HepG2 (cell line): ENCODE measurements at regions of chr20 and their contacts with region 1.

Region 1: GRCh38 chr20:63537525-63538203 is 488 bp upstream of the PTK6 start:
- DNase-seq: peak; percentile 86
- ATAC-seq: peak; percentile 79
- H3K4me3 ChIP-seq: peak overlapping the region; percentile 37 to 76 (median 64); a peak in 5 of 6 replicates
- H3K27ac ChIP-seq: no peak overlapping the region
- H3K4me1 ChIP-seq: peaks cover 48% of the 10 kb centered on the region
- H3K27me3 ChIP-seq: peaks cover 48 to 65% of the 10 kb centered on the region in 2 experiments
- CTCF ChIP-seq: peak; percentile 99
- EP300 ChIP-seq: peak; percentile 12 to 30; a peak in 2 of 4 replicates
- POLR2A ChIP-seq: 0 out of 4 replicates have a peak, but pooled peaks of 1 of the 2 experiments have one; percentile 30
- RAD21 ChIP-seq: peak; percentile 100

Region 2: GRCh38 chr20:63520504-63520933 is 17.1 kb before region 1 on chr20 and contains the start of gene PPDPF:
- CTCF ChIA-PET with region 1: no interaction called
- POLR2A ChIA-PET with region 1: interaction called, 11 read pairs
- in situ Hi-C with region 1: no loop called
- intact Hi-C with region 1: no loop called
- DNase-seq: no peak
- ATAC-seq: peak; percentile 41
- H3K4me3 ChIP-seq: peak within 1 kb of the TSS; percentile 61 to 69 (median 66); a peak in 4 of 6 replicates
- H3K27ac ChIP-seq: no peak within 1 kb of the TSS
- H3K4me1 ChIP-seq: peaks cover 11% of the 10 kb centered on the region
- H3K27me3 ChIP-seq: peaks cover 24 to 50% of the 10 kb centered on the region in 2 experiments
- CTCF ChIP-seq: no peak
- EP300 ChIP-seq: no peak
- POLR2A ChIP-seq: peak; percentile 52 to 78; a peak in 2 of 4 replicates
- RAD21 ChIP-seq: no peak
- total RNA-seq, gene PPDPF: 6.0 and 7.0 TPM in 2 replicates

Region 3: DNA sequence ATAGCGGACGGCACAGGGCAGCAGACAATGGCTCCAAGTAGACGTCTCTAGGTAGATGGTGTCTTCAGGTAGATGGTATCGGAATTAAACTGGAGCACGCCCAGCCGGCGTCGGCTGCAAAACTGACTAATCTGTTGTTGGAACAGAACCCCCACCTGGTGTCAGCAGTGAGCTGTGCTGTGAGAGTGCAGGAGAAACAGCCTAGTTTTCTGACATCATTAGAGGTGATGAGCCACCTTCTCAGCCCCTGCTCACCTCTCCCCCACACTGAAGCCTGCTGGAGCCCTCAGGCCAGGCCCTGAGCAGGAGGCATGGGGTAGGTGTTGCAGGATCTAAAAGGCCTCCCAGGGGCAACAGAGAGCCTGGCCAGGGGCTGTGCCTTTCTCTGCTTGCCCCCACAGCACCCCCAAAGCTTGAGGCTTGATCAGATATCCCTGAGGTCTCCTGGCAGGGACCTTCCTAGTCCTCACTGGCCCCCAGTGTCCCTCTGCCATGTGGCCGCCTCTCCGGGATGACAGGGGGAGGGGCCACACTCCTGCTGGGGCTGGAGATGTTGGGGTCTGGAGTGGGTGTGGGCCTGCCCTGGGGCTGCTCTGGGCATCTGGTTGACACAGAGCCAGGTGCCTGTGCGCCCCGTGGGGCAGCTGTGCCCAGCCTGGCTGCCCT is 43.3 kb after region 1 on chr20:
- CTCF ChIA-PET with region 1: interaction called, 29 read pairs
- POLR2A ChIA-PET with region 1: interaction called, 6 read pairs
- in situ Hi-C with region 1: loop called (anchors 5 kb)
- intact Hi-C with region 1: loop called (anchors 1 kb)
- DNase-seq: peak; percentile 78
- ATAC-seq: peak; percentile 74
- H3K4me3 ChIP-seq: no peak overlapping the region
- H3K27ac ChIP-seq: no peak overlapping the region
- H3K4me1 ChIP-seq: peaks cover 62% of the 10 kb centered on the region
- H3K27me3 ChIP-seq: peaks cover 6 to 44% of the 10 kb centered on the region in 2 experiments; a peak in 3 of 5 replicates
- CTCF ChIP-seq: peak; percentile 95
- EP300 ChIP-seq: no peak
- POLR2A ChIP-seq: no peak
- RAD21 ChIP-seq: peak; percentile 93

Region 4: GRCh38 chr20:63641792-63642544 is 104.3 kb after region 1 on chr20:
- CTCF ChIA-PET with region 1: no interaction called
- POLR2A ChIA-PET with region 1: interaction called, 12 read pairs
- in situ Hi-C with region 1: no loop called
- intact Hi-C with region 1: no loop called
- DNase-seq: peak; percentile 90
- ATAC-seq: peak; percentile 77
- H3K4me3 ChIP-seq: peak overlapping the region; percentile 49 to 81 (median 63)
- H3K27ac ChIP-seq: peak overlapping the region; percentile 56
- H3K4me1 ChIP-seq: peaks cover 20% of the 10 kb centered on the region
- H3K27me3 ChIP-seq: no peaks in the 10 kb centered on the region; a peak in 1 of 5 replicates
- CTCF ChIP-seq: peak; percentile 74
- EP300 ChIP-seq: no peak
- POLR2A ChIP-seq: peak; percentile 41 to 73; a peak in 3 of 4 replicates
- RAD21 ChIP-seq: peak; percentile 90

Region 5: DNA sequence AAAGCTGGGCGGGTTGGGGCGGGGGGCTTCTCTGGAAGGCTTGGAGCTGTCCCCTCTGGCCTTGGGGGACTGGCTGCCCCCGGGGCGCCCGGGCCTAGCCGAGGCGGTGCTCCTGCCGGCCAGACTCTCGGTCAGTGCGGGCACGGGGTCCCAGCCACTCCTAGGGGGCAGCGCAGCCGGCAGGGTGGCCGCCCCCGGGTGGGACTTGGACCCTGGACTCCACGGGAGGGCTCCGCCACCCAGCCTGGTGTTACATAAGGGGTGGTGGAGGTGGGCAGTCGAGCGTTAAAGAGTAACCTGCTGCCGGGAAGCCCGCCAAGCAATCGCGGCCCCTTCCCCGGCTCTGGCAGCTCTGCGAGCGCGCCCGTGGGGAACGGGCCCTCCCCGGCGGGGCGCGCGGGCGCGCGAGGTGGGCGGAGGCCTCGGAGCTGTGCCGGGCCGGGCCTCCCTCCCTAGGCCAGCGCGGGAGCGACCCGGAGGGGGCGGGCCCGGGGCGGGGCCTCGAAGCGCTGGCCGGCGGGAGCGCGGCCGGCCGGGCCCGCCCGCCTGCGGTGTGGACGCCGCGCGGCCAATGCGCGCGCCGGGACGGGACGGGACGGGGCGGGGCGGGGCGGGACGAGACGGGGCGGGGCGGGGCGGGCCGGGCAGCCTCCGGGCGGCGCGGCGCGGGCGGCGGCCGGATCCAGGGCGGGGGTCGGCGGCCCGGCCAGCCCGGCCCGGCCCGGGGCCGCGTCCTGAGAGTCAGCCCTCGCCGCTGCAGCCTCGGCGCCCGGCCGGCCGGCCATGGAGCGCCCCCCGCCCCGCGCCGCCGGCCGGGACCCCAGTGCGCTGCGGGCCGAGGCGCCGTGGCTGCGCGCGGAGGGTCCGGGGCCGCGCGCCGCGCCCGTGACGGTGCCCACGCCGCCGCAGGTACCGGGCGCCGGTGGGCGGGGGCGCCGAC is 201.7 kb after region 1 on chr20 and contains the start of gene SLC2A4RG:
- CTCF ChIA-PET with region 1: no interaction called
- POLR2A ChIA-PET with region 1: interaction called, 3 read pairs
- in situ Hi-C with region 1: no loop called
- intact Hi-C with region 1: loop called (anchors 5 kb)
- DNase-seq: peak; percentile 94
- ATAC-seq: peak; percentile 15
- H3K4me3 ChIP-seq: peak within 1 kb of the TSS; percentile 74 to 93 (median 85)
- H3K27ac ChIP-seq: peak within 1 kb of the TSS; percentile 93
- H3K4me1 ChIP-seq: peaks cover 64% of the 10 kb centered on the region
- H3K27me3 ChIP-seq: no peaks in the 10 kb centered on the region
- CTCF ChIP-seq: peak; percentile 54
- EP300 ChIP-seq: peak; percentile 36 to 77; a peak in 3 of 4 replicates
- POLR2A ChIP-seq: peak in 1 of 2 experiments; percentile 54; a peak in 2 of 4 replicates
- RAD21 ChIP-seq: peak; percentile 76
- total RNA-seq, gene SLC2A4RG: 47.4 and 91.4 TPM in 2 replicates